ENCODE measurements at regions of chr1 and their contacts with region 1.

Region 1: GRCh38 chr1:230167419-230167852 is 100.4 kb downstream of the GALNT2 start:
- DNase-seq: peak; percentile 57
- H3K4me3 Mint-ChIP-seq: no peak overlapping the region
- H3K27ac Mint-ChIP-seq: peak overlapping the region; percentile 1
- H3K4me1 Mint-ChIP-seq: peaks cover 35% of the 10 kb centered on the region
- H3K27me3 Mint-ChIP-seq: no peaks in the 10 kb centered on the region
- CTCF ChIP-seq: peak; percentile 88

Region 2: GRCh38 chr1:229661022-229661877 is 506.2 kb before region 1 on chr1:
- CTCF ChIA-PET with region 1: interaction called, 3 read pairs
- intact Hi-C with region 1: loop called (anchors 2 kb)
- DNase-seq: peak; percentile 89
- H3K4me3 Mint-ChIP-seq: no peak overlapping the region
- H3K27ac Mint-ChIP-seq: peak overlapping the region; percentile 49
- H3K4me1 Mint-ChIP-seq: no peaks in the 10 kb centered on the region
- H3K27me3 Mint-ChIP-seq: no peaks in the 10 kb centered on the region
- CTCF ChIP-seq: peak; percentile 92

Region 3: GRCh38 chr1:229803626-229804217 is 363.7 kb before region 1 on chr1:
- CTCF ChIA-PET with region 1: interaction called, 4 read pairs
- intact Hi-C with region 1: loop called (anchors 5 kb)
- DNase-seq: peak; percentile 50
- H3K4me3 Mint-ChIP-seq: no peak overlapping the region
- H3K27ac Mint-ChIP-seq: no peak overlapping the region
- H3K4me1 Mint-ChIP-seq: peaks cover 12% of the 10 kb centered on the region
- H3K27me3 Mint-ChIP-seq: peaks cover 28% of the 10 kb centered on the region
- CTCF ChIP-seq: no peak

Region 4: GRCh38 chr1:230066466-230067404 is 100.7 kb before region 1 on chr1 and contains the start of gene GALNT2:
- CTCF ChIA-PET with region 1: no interaction called
- intact Hi-C with region 1: loop called (anchors 5 kb)
- DNase-seq: peak; percentile 94
- H3K4me3 Mint-ChIP-seq: peak within 1 kb of the TSS; percentile 99
- H3K27ac Mint-ChIP-seq: peak within 1 kb of the TSS; percentile 54
- H3K4me1 Mint-ChIP-seq: peaks cover 33% of the 10 kb centered on the region
- H3K27me3 Mint-ChIP-seq: no peaks in the 10 kb centered on the region
- CTCF ChIP-seq: no peak
- total RNA-seq, gene GALNT2: 136 and 141 TPM in 2 replicates

Region 5: GRCh38 chr1:230104395-230105244 is 62.8 kb before region 1 on chr1:
- CTCF ChIA-PET with region 1: interaction called, 3 read pairs
- intact Hi-C with region 1: loop called (anchors 1 kb)
- DNase-seq: peak; percentile 98
- H3K4me3 Mint-ChIP-seq: peak overlapping the region; percentile 72
- H3K27ac Mint-ChIP-seq: peak overlapping the region; percentile 80
- H3K4me1 Mint-ChIP-seq: peaks cover 82% of the 10 kb centered on the region
- H3K27me3 Mint-ChIP-seq: no peaks in the 10 kb centered on the region
- CTCF ChIP-seq: no peak

Region 6: GRCh38 chr1:230725256-230726012 is 558.0 kb after region 1 on chr1:
- CTCF ChIA-PET with region 1: no interaction called
- intact Hi-C with region 1: no loop called
- DNase-seq: no peak
- H3K4me3 Mint-ChIP-seq: no peak overlapping the region
- H3K27ac Mint-ChIP-seq: no peak overlapping the region
- H3K4me1 Mint-ChIP-seq: no peaks in the 10 kb centered on the region
- H3K27me3 Mint-ChIP-seq: no peaks in the 10 kb centered on the region
- CTCF ChIP-seq: no peak